ENCODE measurements at regions of chr19 and their contacts with region 1.

Region 1: GRCh38 chr19:38729653-38730469 is 14.4 kb downstream of the CAPN12 start:
- DNase-seq: peak; percentile 56
- H3K4me3 ChIP-seq: no peak overlapping the region
- H3K27ac ChIP-seq: peak overlapping the region in 1 of 2 donors; percentile 18
- H3K4me1 ChIP-seq: no peaks in the 10 kb centered on the region
- H3K27me3 ChIP-seq: no peaks in the 10 kb centered on the region
- CTCF ChIP-seq: peak; percentile 58 to 81 (median 70)
- POLR2A ChIP-seq: no peak

Region 2: DNA sequence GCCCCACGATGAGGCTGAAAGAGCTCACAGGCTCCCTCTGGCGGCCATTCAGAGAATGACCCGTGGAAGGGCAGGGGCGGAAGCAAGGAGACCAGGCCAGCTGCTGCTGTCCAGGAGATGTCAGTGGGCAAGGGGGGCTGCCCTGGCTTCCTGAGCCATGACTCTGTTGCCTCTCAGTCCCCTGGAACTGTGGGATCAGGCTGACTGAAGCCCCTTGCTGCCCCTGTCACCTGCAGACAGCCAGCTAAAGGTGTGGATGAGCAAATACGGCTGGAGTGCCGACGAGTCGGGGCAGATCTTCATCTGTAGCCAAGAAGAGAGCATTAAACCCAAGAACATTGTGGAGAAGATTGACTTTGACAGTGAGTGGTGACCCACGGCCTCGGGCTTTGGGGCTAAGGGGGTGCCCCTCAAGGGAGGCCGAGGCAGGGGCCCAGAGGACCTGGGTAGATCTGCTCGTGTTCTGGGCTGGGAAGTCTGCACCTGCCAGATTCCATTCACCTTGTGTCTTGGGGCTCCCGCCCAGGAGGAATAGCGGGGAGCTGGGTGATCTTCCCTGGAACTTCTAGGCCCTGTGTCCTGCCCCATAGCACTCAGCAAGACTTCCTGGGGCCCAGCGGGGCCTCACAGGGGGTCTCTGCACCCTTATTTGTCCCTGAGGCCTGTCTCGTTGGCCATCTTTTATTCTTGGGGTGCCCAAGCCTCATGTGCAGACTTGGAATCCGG is 94.9 kb before region 1 on chr19:
- intact Hi-C with region 1: loop called (anchors 5 kb)
- DNase-seq: peak; percentile 60
- H3K4me3 ChIP-seq: no peak overlapping the region
- H3K27ac ChIP-seq: no peak overlapping the region
- H3K4me1 ChIP-seq: no peaks in the 10 kb centered on the region
- H3K27me3 ChIP-seq: no peaks in the 10 kb centered on the region
- CTCF ChIP-seq: peak; percentile 84 to 94 (median 91)
- POLR2A ChIP-seq: no peak

Region 3: DNA sequence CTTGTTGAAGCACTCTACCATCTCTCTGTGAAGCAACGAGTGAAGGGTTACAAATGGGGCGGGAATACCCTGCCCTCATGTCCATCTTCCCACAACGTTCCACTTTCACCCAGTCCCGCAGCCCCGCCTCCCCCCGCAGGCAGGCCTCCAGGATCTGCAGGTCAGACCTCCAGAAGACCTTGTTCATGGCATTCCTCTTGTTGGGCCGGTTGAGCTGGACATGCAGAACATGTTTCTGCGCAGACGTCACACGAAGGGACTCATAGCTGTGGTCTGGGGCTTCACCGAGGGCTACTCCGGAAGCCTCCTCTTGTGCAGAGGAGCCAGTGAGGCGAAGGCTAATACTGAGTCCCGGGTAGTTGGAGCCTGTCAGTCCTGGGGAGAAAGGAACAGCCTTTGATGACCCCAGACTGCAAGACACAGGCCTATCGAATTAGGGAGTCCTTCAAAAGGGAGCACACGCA is 101.3 kb after region 1 on chr19:
- intact Hi-C with region 1: loop called (anchors 10 kb)
- DNase-seq: peak; percentile 65
- H3K4me3 ChIP-seq: peak overlapping the region; percentile 57 to 58
- H3K27ac ChIP-seq: peak overlapping the region; percentile 88 to 89
- H3K4me1 ChIP-seq: peaks cover 16% of the 10 kb centered on the region
- H3K27me3 ChIP-seq: no peaks in the 10 kb centered on the region
- CTCF ChIP-seq: no peak
- POLR2A ChIP-seq: no peak

Region 4: DNA sequence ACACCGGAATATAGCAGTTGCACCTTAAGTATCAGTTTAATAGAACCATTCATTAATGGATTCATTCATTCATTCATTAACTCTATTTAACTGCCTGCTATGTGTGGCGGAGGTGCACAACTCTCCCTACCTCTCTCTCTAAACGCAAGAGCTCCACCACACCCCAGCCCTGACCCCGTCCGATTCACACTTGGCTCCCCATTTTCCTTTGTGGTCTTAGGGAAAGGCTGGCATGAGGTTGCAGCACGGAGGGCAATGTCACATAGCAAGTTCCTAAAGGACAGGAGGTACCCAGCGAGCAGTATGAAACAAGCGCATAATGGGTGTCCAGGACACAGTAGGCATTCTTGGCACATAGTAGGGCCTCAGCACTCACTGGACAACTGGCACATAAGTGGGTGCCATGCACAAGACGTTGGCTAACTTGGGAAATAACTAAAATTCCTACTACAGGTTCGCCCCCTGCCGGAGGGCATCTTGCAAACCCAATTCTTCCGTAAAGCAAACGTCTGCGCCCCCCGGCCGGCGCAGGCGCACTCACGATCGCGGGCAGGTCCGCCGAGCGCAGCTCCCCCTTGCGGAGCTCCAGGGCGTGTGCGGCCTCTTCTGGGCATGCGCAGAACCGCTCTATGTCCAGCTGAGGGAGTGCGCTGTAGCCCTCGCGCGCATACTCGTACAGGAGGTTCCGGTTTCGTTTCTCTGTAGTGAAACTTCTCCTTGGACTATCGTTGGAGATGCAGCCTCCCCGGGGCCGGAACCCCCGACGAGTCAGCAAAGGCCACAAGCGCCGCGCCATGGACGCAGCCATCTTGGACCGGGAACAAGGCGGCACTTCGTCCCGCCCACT is 200.3 kb after region 1 on chr19 and contains the start of gene SARS2:
- intact Hi-C with region 1: loop called (anchors 10 kb)
- DNase-seq: peak; percentile 85
- H3K4me3 ChIP-seq: peak within 1 kb of the TSS; percentile 60 to 61
- H3K27ac ChIP-seq: peak within 1 kb of the TSS; percentile 91 to 94
- H3K4me1 ChIP-seq: peaks cover 5% of the 10 kb centered on the region
- H3K27me3 ChIP-seq: no peaks in the 10 kb centered on the region
- CTCF ChIP-seq: peak; percentile 99 to 100 (median 100)
- POLR2A ChIP-seq: peak; percentile 16
- total RNA-seq, gene SARS2: 23.3 to 57.5 TPM

Region 5: GRCh38 chr19:39070888-39071287 is 341.0 kb after region 1 on chr19:
- intact Hi-C with region 1: no loop called
- DNase-seq: no peak
- H3K4me3 ChIP-seq: no peak overlapping the region
- H3K27ac ChIP-seq: no peak overlapping the region
- H3K4me1 ChIP-seq: no peaks in the 10 kb centered on the region
- H3K27me3 ChIP-seq: no peaks in the 10 kb centered on the region
- CTCF ChIP-seq: no peak
- POLR2A ChIP-seq: no peak

Measured in prostate gland (tissue), 2 donors.